Ascending aorta (tissue), 2 donors: ENCODE measurements at regions of chr11 and their contacts with region 1.

Region 1: GRCh38 chr11:15208378-15209222 is 93.9 kb downstream of the INSC start:
- DNase-seq: peak in 1 of 2 donors; percentile 82
- H3K4me3 ChIP-seq: no peak overlapping the region
- H3K27ac ChIP-seq: no peak overlapping the region
- H3K4me1 ChIP-seq: no peaks in the 10 kb centered on the region
- H3K27me3 ChIP-seq: no peaks in the 10 kb centered on the region
- CTCF ChIP-seq: peak; percentile 80 to 94 (median 92)

Region 2: GRCh38 chr11:14974515-14975251 is 233.9 kb before region 1 on chr11:
- intact Hi-C with region 1: loop called (anchors 5 kb)
- DNase-seq: no peak
- H3K4me3 ChIP-seq: peak overlapping the region; percentile 43 to 51
- H3K27ac ChIP-seq: no peak overlapping the region
- H3K4me1 ChIP-seq: peaks cover 0 to 19% of the 10 kb centered on the region in 2 donors
- H3K27me3 ChIP-seq: peaks cover 10% of the 10 kb centered on the region
- CTCF ChIP-seq: peak in 2 of 3 experiments; percentile 46 to 59

Region 3: GRCh38 chr11:15101072-15101709 is 107.4 kb before region 1 on chr11:
- intact Hi-C with region 1: loop called (anchors 1 kb)
- DNase-seq: peak in 1 of 2 donors; percentile 82
- H3K4me3 ChIP-seq: no peak overlapping the region
- H3K27ac ChIP-seq: no peak overlapping the region
- H3K4me1 ChIP-seq: no peaks in the 10 kb centered on the region
- H3K27me3 ChIP-seq: no peaks in the 10 kb centered on the region
- CTCF ChIP-seq: peak; percentile 59 to 96 (median 87)